ENCODE measurements at regions of chr9 and their contacts with region 1.

Region 1: DNA sequence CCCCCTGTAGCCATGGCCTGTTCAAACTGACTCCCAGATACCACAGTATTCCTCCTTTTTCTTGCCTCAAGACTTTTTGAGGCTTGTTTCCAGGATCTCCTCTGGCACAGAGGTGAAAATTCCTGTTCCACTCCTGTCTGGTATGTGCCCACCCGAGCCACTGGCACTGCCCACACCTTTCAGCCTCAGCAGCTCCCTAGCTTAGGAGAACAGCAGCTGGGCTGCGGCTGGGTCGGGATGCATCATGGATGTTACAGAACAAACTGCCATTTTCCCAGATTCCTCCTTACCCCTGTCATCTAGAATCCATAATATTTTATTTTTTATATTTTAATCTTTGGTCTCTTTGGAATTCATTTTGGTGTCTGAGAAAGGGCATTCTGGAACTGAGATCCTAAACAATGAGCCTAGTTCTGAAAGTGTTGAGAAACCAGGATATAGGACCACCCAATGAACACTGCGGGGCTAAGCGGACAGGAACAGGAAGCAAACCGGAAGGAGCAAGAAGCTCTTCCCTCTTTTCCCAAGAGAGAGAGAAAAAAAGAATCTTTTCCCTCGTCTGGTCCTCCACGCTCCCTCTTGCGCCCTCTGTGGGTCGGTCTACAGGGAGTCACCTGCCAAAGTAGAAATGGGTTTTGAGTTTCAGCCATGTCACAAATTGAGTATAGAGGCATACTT is 12.5 kb downstream of the OR2S2 start:
- DNase-seq: no peak
- H3K4me3 ChIP-seq: no peak overlapping the region
- CTCF ChIP-seq: peak; percentile 86

Region 2: DNA sequence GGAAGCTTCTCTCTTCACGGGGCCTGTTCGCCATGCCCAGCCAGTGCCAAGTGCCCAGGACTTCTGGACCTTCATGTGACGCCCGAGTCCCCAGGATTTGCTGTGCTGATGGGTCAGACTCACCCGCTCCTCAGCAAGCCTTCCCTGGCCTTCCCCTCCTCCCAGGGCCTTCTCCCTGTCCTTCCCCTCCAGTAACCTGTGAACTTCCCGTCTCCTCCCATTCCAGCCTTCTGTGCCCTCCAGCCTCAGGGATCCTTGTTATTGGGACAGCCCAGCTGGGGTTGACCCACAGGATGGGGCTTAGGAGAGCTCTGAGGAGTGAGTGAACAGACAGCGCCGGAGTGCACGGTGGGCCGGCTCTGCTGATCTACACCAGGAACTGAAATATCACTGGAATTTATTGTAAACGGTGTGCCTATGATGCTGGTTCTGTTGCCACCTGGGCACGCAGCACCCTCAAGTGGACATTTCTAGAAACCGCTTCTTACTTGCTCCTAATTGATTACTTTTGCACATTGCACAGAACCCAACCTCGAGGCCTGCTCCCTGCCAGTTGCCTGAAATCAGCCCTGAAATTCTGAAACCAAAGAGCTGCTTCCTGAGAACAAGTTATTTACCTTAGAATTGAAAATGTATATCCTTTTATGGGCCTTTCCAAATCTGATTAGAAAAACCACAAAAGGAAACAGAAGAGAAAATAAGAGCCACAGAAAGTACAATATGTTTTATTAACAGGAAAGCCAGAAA is 34.7 kb before region 1 on chr9:
- CTCF ChIA-PET with region 1: interaction called, 207 read pairs
- POLR2A ChIA-PET with region 1: interaction called, 4 read pairs
- DNase-seq: no peak
- H3K4me3 ChIP-seq: no peak overlapping the region
- CTCF ChIP-seq: peak; percentile 41

Region 3: GRCh38 chr9:36029765-36030528 is 84.5 kb after region 1 on chr9:
- CTCF ChIA-PET with region 1: interaction called, 17 read pairs
- POLR2A ChIA-PET with region 1: no interaction called
- DNase-seq: peak; percentile 94
- H3K4me3 ChIP-seq: no peak overlapping the region
- CTCF ChIP-seq: no peak

Measured in AG04449 (cell line).